Common myeloid progenitor, CD34-positive (primary cell): ENCODE measurements at regions of chr4 and their contacts with region 1.

Region 1: DNA sequence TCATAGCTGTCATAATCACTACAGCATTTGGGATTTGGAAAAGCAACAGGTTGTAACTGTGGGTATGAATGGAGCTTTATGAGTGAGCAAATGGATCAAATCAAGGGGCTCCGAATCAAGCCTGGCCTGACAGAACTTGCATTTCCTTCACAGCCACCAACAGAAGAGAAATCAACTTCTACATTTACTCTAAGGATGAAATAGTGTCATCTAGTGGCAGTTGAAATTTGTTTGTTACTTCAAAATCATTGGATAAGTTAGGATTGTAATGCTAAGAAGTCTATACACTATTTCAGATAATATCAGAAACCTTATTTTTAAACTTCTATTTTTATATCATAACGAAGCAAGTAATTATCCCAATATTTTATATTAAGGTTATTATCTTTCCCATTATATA is 10.7 kb upstream of the WDR17 start:
- DNase-seq: peak in 2 of 3 donors; percentile 42 to 44
- H3K4me3 ChIP-seq: no peak overlapping the region
- H3K27ac ChIP-seq: no peak overlapping the region
- H3K4me1 ChIP-seq: peaks cover 0 to 11% (median 6%) of the 10 kb centered on the region in 4 experiments
- H3K27me3 ChIP-seq: no peaks in the 10 kb centered on the region

Region 2: DNA sequence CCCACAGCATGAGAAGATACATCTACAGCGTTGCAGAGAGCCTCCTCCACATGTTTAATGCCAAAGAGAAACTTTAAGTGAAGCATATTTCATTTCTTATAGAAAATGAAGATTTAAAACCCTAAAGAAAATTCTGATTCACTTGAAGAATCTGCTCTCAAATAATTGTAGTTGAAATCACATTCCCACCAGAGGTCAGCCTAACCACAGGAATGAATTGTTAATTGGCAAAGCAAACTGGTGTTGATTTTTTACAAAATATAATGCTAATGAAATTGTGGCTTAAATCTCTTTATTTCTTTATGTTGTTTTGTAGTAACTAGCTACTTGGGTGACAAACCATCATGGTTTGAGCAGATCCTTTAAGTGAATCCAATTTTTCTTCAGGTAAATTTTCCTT is 20.4 kb before region 1 on chr4:
- CTCF ChIA-PET with region 1: interaction called, 84 read pairs
- POLR2A ChIA-PET with region 1: no interaction called
- DNase-seq: peak; percentile 64 to 84 (median 74)
- H3K4me3 ChIP-seq: no peak overlapping the region
- H3K27ac ChIP-seq: no peak overlapping the region
- H3K4me1 ChIP-seq: peaks cover 0 to 4% (median 0%) of the 10 kb centered on the region in 4 experiments
- H3K27me3 ChIP-seq: no peaks in the 10 kb centered on the region